CD8-positive, alpha-beta memory T cell (primary cell): ENCODE measurements at regions of chr5 and their contacts with region 1.

Region 1: DNA sequence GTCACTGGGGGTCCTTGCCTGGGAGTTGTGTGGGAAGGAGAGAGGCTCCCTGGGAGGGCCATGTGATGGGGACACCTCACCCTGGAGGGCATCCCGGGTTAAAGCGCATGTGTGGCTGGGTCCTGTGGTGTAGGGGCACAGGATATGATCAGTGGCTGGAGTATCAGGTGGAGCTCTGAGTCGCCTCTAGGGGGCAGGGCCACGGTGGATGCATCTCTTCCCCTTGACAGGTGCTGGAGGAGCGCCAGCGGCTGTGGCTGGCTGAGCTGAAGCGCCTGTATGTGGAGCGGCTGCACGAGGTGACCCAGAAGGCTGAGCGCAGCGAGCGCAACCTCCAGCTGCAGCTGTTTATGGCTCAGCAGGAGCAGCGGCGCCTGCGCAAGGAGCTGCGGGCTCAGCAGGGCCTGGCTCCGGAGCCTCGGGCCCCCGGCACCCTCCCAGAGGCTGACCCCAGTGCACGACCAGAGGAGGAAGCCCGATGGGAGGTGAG is 7.6 kb downstream of the N4BP3 start:
- DNase-seq: peak; percentile 65 to 93 (median 78)
- H3K4me3 ChIP-seq: peak overlapping the region; percentile 23
- H3K4me3 Mint-ChIP-seq: peak overlapping the region in 6 of 7 donors; percentile 26 to 83 (median 44)
- H3K27ac ChIP-seq: no peak overlapping the region
- H3K27ac Mint-ChIP-seq: peak overlapping the region in 5 of 8 donors; percentile 50 to 81 (median 68)
- H3K4me1 ChIP-seq: peaks cover 44% of the 10 kb centered on the region
- H3K4me1 Mint-ChIP-seq: peaks cover 18 to 44% (median 22%) of the 10 kb centered on the region in 3 donors
- H3K27me3 ChIP-seq: no peaks in the 10 kb centered on the region
- H3K27me3 Mint-ChIP-seq: peaks cover 0 to 5% of the 10 kb centered on the region in 2 donors

Region 2: GRCh38 chr5:177403792-177404640 is 716.9 kb before region 1 on chr5:
- CTCF ChIA-PET with region 1: no interaction called
- POLR2A ChIA-PET with region 1: no interaction called
- DNase-seq: peak; percentile 75 to 91 (median 82)
- H3K4me3 ChIP-seq: peak overlapping the region; percentile 69
- H3K4me3 Mint-ChIP-seq: peak overlapping the region; percentile 78 to 91 (median 84)
- H3K27ac ChIP-seq: peak overlapping the region; percentile 57
- H3K27ac Mint-ChIP-seq: peak overlapping the region in 7 of 8 donors; percentile 26 to 94 (median 83)
- H3K4me1 ChIP-seq: peaks cover 35% of the 10 kb centered on the region
- H3K4me1 Mint-ChIP-seq: peaks cover 26 to 42% (median 30%) of the 10 kb centered on the region in 3 donors
- H3K27me3 ChIP-seq: no peaks in the 10 kb centered on the region
- H3K27me3 Mint-ChIP-seq: peaks cover 0 to 11% of the 10 kb centered on the region in 2 donors

Region 3: DNA sequence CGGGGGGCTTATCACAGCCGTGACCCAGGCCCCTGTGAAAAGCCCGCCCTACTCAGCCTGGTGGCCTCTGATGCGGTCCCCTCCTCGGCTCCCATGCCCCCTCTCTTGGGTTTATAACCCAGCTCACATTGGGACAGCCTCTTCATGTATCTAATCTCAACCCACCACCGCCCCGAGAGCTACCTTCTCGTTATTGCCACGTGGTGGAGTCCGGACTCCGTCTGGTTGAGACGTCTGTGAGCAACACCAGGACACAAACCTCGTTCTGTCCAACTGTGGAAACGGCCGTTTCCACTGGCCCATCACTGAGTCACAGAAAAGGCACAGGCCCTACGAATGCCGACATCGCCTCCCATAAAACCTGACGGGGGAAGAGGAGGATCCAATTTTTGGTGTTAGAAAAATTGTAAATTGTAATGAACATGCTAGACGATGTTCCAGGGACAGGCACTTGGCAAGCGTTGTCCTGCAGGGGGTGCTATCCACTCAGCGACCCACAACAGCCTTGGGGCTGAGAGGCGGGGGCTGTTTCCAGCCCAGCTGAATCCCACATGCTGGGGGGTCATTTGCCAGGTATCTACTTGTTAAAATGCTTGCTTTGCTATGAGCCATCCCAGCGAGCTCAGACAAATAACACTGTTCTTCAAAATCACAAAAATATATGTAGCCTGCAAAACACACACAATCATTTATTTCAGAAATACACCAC is 44.9 kb before region 1 on chr5:
- CTCF ChIA-PET with region 1: interaction called, 46 read pairs
- POLR2A ChIA-PET with region 1: no interaction called
- DNase-seq: peak; percentile 66 to 86 (median 75)
- H3K4me3 ChIP-seq: no peak overlapping the region
- H3K4me3 Mint-ChIP-seq: peak overlapping the region in 2 of 7 donors; percentile 25
- H3K27ac ChIP-seq: no peak overlapping the region
- H3K27ac Mint-ChIP-seq: peak overlapping the region in 1 of 8 donors; percentile 78
- H3K4me1 ChIP-seq: no peaks in the 10 kb centered on the region
- H3K4me1 Mint-ChIP-seq: peaks cover 5 to 6% (median 5%) of the 10 kb centered on the region in 3 donors
- H3K27me3 ChIP-seq: no peaks in the 10 kb centered on the region
- H3K27me3 Mint-ChIP-seq: peaks cover 6 to 10% of the 10 kb centered on the region in 2 donors

Region 4: GRCh38 chr5:178090858-178091540 is 29.9 kb before region 1 on chr5:
- CTCF ChIA-PET with region 1: interaction called, 10 read pairs
- POLR2A ChIA-PET with region 1: interaction called, 6 read pairs
- DNase-seq: no peak
- H3K4me3 ChIP-seq: no peak overlapping the region
- H3K4me3 Mint-ChIP-seq: no peak overlapping the region
- H3K27ac ChIP-seq: no peak overlapping the region
- H3K27ac Mint-ChIP-seq: no peak overlapping the region
- H3K4me1 ChIP-seq: peaks cover 13% of the 10 kb centered on the region
- H3K4me1 Mint-ChIP-seq: peaks cover 11 to 17% (median 15%) of the 10 kb centered on the region in 3 donors
- H3K27me3 ChIP-seq: no peaks in the 10 kb centered on the region
- H3K27me3 Mint-ChIP-seq: peaks cover 6 to 12% of the 10 kb centered on the region in 2 donors

Region 5: GRCh38 chr5:178137991-178138390 is 17.1 kb after region 1 on chr5:
- CTCF ChIA-PET with region 1: interaction called, 43 read pairs
- POLR2A ChIA-PET with region 1: interaction called, 4 read pairs
- DNase-seq: no peak
- H3K4me3 ChIP-seq: no peak overlapping the region
- H3K4me3 Mint-ChIP-seq: no peak overlapping the region
- H3K27ac ChIP-seq: no peak overlapping the region
- H3K27ac Mint-ChIP-seq: no peak overlapping the region
- H3K4me1 ChIP-seq: no peaks in the 10 kb centered on the region
- H3K4me1 Mint-ChIP-seq: peaks cover 16 to 29% (median 22%) of the 10 kb centered on the region in 3 donors
- H3K27me3 ChIP-seq: no peaks in the 10 kb centered on the region
- H3K27me3 Mint-ChIP-seq: peaks cover 0 to 4% of the 10 kb centered on the region in 2 donors

Region 6: DNA sequence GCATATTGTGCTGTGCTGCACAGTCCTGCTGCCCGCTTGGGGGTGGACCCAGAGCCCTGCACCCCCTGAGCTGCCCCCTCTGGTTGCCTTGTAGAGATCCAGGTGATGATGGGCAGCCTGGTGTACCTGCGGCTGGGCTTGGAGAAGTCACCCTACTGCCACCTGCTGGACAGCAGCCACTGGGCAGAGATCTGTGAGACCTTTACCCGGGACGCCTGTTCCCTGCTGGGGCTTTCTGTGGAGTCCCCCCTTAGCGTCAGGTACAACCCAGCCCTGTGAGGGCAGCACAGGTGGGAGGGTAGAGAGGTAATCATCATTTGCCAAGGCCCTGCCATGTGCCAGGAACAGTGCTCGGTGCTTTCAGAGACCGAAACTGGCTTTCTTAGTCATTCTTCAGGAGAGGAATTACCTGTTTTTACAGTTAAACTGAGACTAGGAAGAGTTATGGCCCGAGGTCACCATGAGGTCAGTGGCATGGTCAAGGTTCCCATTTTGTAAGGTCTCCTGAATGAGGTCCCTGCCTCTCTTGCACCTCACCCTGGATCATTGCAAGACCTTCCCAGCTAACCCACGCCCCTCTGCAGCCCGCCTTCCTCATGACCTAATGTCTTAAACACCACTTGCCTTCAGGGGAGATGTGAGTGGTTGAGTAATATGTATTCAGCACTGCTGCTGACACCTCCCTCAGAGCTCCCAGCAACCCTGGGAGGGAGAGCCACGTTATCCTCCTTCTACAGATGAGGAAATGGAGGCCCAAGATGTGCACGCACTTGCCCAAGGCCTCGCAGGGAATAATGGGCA is 25.3 kb after region 1 on chr5:
- CTCF ChIA-PET with region 1: interaction called, 43 read pairs
- POLR2A ChIA-PET with region 1: no interaction called
- DNase-seq: peak; percentile 61 to 85 (median 66)
- H3K4me3 ChIP-seq: no peak overlapping the region
- H3K4me3 Mint-ChIP-seq: peak overlapping the region in 1 of 7 donors; percentile 52
- H3K27ac ChIP-seq: no peak overlapping the region
- H3K27ac Mint-ChIP-seq: peak overlapping the region in 4 of 8 donors; percentile 45 to 74 (median 60)
- H3K4me1 ChIP-seq: no peaks in the 10 kb centered on the region
- H3K4me1 Mint-ChIP-seq: peaks cover 7 to 13% (median 12%) of the 10 kb centered on the region in 3 donors
- H3K27me3 ChIP-seq: no peaks in the 10 kb centered on the region
- H3K27me3 Mint-ChIP-seq: no peaks in the 10 kb centered on the region